Activated T-helper 1 cell treated with anti-CD3 and anti-CD28 coated beads, Interleukin-12 subunit alpha, Interleukin-12 subunit beta, Interleukin-2, Interleukin-4 antibody, amounts not matched to agents 30 ng/mL and 10 ng/mL and 1 ng/mL, durations not matched to agents 14 hours and 24 hours and 36 hours (primary cell): ENCODE measurements at regions of chr13 and their contacts with region 1.

Region 1: GRCh38 chr13:94667190-94667589 is 45.2 kb downstream of the SOX21 start:
- DNase-seq: no peak
- H3K4me3 Mint-ChIP-seq: peak overlapping the region; percentile 66
- H3K27ac Mint-ChIP-seq: peak overlapping the region; percentile 94
- H3K4me1 Mint-ChIP-seq: peaks cover 50% of the 10 kb centered on the region
- H3K27me3 Mint-ChIP-seq: peaks cover 8% of the 10 kb centered on the region

Region 2: DNA sequence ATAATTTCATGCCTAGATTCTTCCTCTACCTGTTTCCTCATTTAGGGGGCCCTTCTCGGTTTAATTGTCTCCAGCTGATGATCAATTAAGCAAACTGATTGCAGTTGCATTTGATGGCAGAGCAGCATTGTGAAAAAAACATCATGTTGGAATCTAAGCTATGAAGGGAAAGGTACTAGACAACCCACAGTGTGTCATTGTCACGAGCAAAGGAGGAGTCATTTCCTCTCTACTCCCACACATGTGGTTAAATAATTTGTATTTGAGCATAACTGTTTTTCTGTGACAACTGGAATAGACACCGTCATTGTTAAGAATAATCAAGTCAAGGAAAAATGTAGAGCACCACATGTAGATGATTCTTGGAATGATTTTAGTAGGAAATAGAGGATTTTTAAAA is 428.1 kb before region 1 on chr13:
- intact Hi-C with region 1: loop called (anchors 5 kb)
- DNase-seq: no peak
- H3K4me3 Mint-ChIP-seq: peak overlapping the region; percentile 20
- H3K27ac Mint-ChIP-seq: peak overlapping the region; percentile 35
- H3K4me1 Mint-ChIP-seq: peaks cover 36% of the 10 kb centered on the region
- H3K27me3 Mint-ChIP-seq: peaks cover 8% of the 10 kb centered on the region

Region 3: GRCh38 chr13:94351292-94351990 is 315.7 kb before region 1 on chr13:
- intact Hi-C with region 1: loop called (anchors 1 kb)
- DNase-seq: no peak
- H3K4me3 Mint-ChIP-seq: no peak overlapping the region
- H3K27ac Mint-ChIP-seq: peak overlapping the region; percentile 57
- H3K4me1 Mint-ChIP-seq: peaks cover 23% of the 10 kb centered on the region
- H3K27me3 Mint-ChIP-seq: peaks cover 3% of the 10 kb centered on the region

Region 4: GRCh38 chr13:94601446-94602431 is 65.5 kb before region 1 on chr13 and contains the start of gene GPR180:
- intact Hi-C with region 1: loop called (anchors 2 kb)
- DNase-seq: peak; percentile 89
- H3K4me3 Mint-ChIP-seq: peak within 1 kb of the TSS; percentile 88
- H3K27ac Mint-ChIP-seq: peak within 1 kb of the TSS; percentile 75
- H3K4me1 Mint-ChIP-seq: peaks cover 31% of the 10 kb centered on the region
- H3K27me3 Mint-ChIP-seq: no peaks in the 10 kb centered on the region
- total RNA-seq, gene GPR180: 9.6 and 11.1 TPM in 2 replicates

Region 5: DNA sequence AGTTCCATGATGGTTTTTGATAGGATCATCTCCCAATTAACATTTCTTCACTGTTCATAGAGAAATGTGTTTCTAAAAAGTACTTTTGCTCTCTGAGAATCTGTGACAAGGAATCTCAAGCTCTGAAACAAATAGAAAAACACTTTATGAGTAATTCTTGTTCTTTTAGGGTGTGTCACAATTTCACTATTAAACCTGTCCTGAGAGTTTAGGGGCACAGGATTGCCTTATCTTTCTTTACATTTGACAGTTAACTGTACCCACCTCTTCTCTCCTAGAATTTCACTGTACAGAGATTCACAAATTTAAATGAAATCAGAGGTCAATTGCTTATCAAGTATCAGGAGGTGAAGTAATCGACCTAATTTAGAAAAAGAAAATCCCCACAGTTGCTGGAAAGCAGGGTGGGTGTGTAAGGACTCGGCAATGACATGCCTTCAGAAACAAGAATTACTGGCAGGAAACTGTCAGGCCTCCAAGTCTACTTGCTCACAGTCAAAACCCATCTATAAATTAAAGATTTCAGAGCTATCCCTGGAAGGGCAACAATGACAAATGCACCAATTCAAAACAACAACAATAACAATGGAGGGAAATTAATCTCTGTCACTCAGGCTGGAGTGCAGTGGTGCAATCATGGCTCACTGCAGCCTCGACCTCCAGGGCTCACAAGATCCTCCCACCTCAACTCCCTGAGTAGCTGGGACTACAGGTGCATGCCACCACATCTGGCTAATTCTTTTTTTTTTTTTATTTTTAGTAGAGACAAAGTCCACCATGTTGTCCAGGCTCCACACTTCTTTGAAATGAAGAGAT is 383.8 kb after region 1 on chr13:
- intact Hi-C with region 1: loop called (anchors 5 kb)
- DNase-seq: no peak
- H3K4me3 Mint-ChIP-seq: no peak overlapping the region
- H3K27ac Mint-ChIP-seq: peak overlapping the region; percentile 26
- H3K4me1 Mint-ChIP-seq: peaks cover 24% of the 10 kb centered on the region
- H3K27me3 Mint-ChIP-seq: no peaks in the 10 kb centered on the region

Region 6: DNA sequence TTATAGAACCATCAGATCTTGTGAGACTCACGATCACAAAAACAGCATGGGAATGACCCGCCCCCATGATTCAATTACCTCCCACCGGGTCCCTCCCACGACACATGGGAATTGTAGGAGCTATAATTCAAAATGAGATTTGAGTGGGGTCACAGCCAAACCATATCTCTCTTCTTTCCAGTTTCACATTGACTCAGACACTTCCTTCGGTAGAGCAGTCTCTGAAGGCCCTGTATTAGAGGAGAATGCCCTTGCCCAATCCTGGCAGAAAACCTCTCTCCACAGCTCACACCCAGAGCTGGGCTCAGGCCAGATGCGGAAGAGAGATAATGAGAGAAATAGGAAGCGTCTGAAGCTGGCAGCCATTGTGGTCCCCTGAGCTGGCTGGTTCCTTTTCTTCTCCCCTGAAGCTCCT is 812.9 kb after region 1 on chr13:
- intact Hi-C with region 1: loop called (anchors 5 kb)
- DNase-seq: no peak
- H3K4me3 Mint-ChIP-seq: peak overlapping the region; percentile 21
- H3K27ac Mint-ChIP-seq: peak overlapping the region; percentile 23
- H3K4me1 Mint-ChIP-seq: peaks cover 25% of the 10 kb centered on the region
- H3K27me3 Mint-ChIP-seq: peaks cover 6% of the 10 kb centered on the region